ENCODE measurements at regions of chr10 and their contacts with region 1.

Region 1: GRCh38 chr10:8416192-8416701 is 361.8 kb downstream of the GATA3 start:
- DNase-seq: peak; percentile 65
- H3K4me3 Mint-ChIP-seq: no peak overlapping the region
- H3K27ac Mint-ChIP-seq: peak overlapping the region; percentile 95
- H3K4me1 Mint-ChIP-seq: peaks cover 57% of the 10 kb centered on the region
- H3K27me3 Mint-ChIP-seq: no peaks in the 10 kb centered on the region

Region 2: DNA sequence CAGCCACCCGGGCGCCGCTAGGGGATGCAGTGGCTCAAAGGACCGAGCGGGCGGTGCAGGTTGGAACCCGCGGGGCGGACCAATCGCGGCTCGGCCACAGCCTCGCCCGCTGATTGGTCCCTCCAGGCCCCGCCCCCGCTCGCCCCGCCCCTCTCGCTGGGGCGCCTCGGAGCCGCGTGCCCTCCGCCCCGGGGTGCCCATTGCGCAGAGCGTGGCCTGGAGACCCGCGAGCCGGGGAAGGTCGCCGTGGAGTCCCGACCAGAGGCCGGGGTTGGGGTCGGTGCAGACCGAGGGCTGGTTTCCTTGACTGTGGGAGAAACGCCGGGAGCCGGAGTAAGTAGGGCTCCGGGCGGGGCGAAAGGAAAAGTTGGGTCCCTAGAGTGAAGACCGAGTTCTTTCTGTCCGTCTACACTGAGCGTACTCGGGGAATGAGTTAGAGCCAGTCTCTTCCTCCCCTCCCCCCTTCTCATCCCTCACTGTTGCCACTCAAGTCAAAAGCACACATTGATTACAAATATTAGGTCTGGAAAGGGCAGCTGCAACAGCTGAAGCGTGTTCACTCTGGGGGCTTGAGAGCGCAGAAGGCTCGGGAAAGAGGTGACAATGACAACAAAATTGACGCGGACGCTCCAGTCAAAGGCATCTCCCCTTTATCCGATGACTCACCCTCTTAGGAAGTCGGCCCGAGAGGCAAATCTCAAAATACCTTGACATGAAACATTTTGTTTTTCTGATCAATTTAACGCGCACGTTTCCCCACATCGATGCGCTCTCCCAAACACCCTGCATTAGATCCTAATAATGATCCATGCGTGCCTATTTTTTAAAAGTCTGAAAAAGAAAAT is 362.6 kb before region 1 on chr10:
- intact Hi-C with region 1: loop called (anchors 5 kb)
- DNase-seq: peak; percentile 89
- H3K4me3 Mint-ChIP-seq: peak overlapping the region; percentile 89
- H3K27ac Mint-ChIP-seq: peak overlapping the region; percentile 95
- H3K4me1 Mint-ChIP-seq: peaks cover 13% of the 10 kb centered on the region
- H3K27me3 Mint-ChIP-seq: no peaks in the 10 kb centered on the region

Region 3: GRCh38 chr10:8238986-8239385 is 177.3 kb before region 1 on chr10:
- intact Hi-C with region 1: loop called (anchors 1 kb)
- DNase-seq: peak; percentile 52
- H3K4me3 Mint-ChIP-seq: peak overlapping the region; percentile 24
- H3K27ac Mint-ChIP-seq: peak overlapping the region; percentile 69
- H3K4me1 Mint-ChIP-seq: peaks cover 61% of the 10 kb centered on the region
- H3K27me3 Mint-ChIP-seq: no peaks in the 10 kb centered on the region

Region 4: GRCh38 chr10:8365935-8366911 is 50.0 kb before region 1 on chr10:
- intact Hi-C with region 1: loop called (anchors 1 kb)
- DNase-seq: peak; percentile 46
- H3K4me3 Mint-ChIP-seq: peak overlapping the region; percentile 64
- H3K27ac Mint-ChIP-seq: peak overlapping the region; percentile 98
- H3K4me1 Mint-ChIP-seq: peaks cover 69% of the 10 kb centered on the region
- H3K27me3 Mint-ChIP-seq: no peaks in the 10 kb centered on the region

Region 5: DNA sequence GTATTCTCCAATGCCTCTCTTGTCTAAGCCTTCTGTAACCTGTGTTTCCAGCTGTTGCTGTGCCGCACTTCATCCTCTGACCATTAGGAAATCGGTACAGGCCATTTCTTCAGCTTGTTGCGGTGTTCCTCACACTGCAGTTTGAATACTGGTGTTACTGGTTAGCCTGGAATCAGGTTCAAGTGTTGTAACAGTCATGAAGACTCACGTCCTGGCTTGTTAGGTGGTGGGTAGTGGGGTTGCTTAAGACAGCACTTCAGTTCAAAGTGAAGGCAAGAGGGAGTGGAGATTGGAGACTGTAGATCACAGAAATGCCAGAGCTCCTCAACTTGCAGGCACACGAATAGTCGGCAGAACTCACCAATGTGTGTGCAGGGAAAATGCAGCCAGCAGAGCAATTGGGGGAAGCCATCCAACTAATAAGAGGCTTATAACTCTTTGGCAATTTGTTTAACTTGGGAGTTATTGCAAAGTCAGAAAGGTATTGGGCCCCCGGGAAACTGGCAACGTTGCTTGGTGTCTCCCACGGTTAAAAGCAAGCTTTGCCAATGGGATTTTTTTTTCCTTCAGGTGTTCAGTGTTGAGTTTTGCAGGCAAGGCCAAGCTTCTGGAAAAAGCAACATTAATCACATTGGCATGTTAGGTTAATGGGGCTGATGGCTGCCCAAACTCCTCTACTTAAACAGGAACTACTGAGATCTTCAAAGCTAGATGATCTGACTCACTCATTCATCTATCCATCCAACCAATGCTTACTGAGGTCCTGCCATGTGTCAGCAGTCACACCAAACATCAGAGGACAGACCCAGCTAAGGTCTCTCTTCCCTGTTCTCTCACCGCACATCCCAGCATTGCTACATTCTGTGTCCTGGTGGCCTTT is 19.2 kb after region 1 on chr10:
- intact Hi-C with region 1: no loop called
- DNase-seq: no peak
- H3K4me3 Mint-ChIP-seq: no peak overlapping the region
- H3K27ac Mint-ChIP-seq: no peak overlapping the region
- H3K4me1 Mint-ChIP-seq: peaks cover 71% of the 10 kb centered on the region
- H3K27me3 Mint-ChIP-seq: no peaks in the 10 kb centered on the region

Region 6: DNA sequence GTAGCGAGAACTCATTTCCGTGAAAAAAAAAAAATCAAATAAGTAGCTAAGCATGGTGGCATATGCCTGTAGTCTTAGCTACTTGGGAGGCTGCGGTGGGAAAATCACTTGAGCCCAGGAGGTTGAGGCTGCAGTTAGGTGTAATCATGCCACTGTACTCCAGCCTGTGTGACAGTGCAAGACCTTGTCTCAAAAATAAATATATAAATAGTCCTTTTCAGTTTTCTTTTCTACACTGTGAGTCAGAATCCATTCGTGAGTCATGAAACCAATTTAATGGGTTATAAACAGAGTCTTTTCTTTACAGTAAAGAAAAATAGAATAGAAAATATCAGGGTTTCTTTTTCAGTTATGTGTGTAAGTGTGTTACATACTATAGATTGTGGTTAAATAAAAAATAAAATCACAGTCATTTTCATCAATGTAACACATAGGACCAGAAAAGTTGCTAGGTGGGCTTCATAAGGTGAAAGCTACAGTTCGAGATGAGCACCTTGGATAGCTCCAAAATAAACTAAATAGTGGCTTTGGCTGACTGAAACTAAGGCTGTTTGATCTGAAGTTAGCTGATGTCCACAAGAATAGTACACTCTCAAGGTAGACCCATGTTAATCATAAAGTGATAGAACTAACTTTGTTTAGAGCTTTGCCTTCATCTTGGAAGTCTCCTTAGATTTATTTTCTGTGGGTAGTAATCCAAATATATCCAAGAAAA is 419.4 kb after region 1 on chr10:
- intact Hi-C with region 1: loop called (anchors 1 kb)
- DNase-seq: no peak
- H3K4me3 Mint-ChIP-seq: no peak overlapping the region
- H3K27ac Mint-ChIP-seq: no peak overlapping the region
- H3K4me1 Mint-ChIP-seq: peaks cover 36% of the 10 kb centered on the region
- H3K27me3 Mint-ChIP-seq: no peaks in the 10 kb centered on the region

Region 7: GRCh38 chr10:9209105-9209798 is 793.0 kb after region 1 on chr10:
- intact Hi-C with region 1: loop called (anchors 5 kb)
- DNase-seq: peak; percentile 60
- H3K4me3 Mint-ChIP-seq: no peak overlapping the region
- H3K27ac Mint-ChIP-seq: peak overlapping the region; percentile 61
- H3K4me1 Mint-ChIP-seq: peaks cover 16% of the 10 kb centered on the region
- H3K27me3 Mint-ChIP-seq: no peaks in the 10 kb centered on the region

Measured in activated T-helper 2 cell treated with anti-CD3 and anti-CD28 coated beads, Interferon-gamma antibody, Interleukin-2, Interleukin-4, amounts not matched to agents 10 μg/mL and 5 μg/mL and 100 μg/mL, durations not matched to agents 14 hours and 24 hours and 36 hours (primary cell).